ENCODE measurements at regions of chr19 and their contacts with region 1.

Region 1: DNA sequence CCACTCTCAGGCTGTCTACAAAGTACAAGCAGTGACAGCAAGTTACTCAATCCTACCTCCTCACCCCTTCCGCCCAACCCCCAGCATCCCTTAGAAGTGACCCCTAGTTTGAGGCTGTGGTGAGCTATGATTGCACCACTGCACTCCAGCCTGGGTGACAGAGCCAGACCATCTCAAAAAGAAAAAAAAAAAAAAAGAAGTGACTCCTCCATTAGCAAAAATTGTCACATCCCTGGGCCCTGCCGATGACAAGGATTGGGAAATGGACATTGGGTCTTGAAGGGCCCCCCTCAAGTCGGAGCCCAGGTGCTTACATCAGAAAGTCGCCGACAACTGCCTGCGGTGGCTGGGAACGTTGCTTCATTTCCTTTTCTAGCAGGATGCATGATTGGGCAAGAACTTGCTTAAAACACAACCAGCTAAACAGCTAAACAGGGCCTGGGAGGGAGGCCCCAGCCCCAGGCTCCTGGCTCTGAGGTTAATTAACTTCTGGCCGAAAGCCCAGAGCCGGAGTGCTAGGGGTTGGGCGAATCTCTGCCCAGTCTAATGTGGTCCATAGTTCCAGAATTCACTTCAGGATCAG is 15.3 kb downstream of the RAB3D start:
- DNase-seq: no peak
- ATAC-seq: peak; percentile 86
- H3K4me3 ChIP-seq: no peak overlapping the region
- H3K27ac ChIP-seq: no peak overlapping the region
- H3K4me1 ChIP-seq: peaks cover 15% of the 10 kb centered on the region
- H3K27me3 ChIP-seq: no peaks in the 10 kb centered on the region
- CTCF ChIP-seq: no peak

Region 2: GRCh38 chr19:11265513-11266236 is 58.5 kb before region 1 on chr19:
- CTCF ChIA-PET with region 1: no interaction called
- POLR2A ChIA-PET with region 1: interaction called, 11 read pairs
- in situ Hi-C with region 1: no loop called
- intact Hi-C with region 1: no loop called
- DNase-seq: no peak
- ATAC-seq: no peak
- H3K4me3 ChIP-seq: no peak overlapping the region
- H3K27ac ChIP-seq: no peak overlapping the region
- H3K4me1 ChIP-seq: no peaks in the 10 kb centered on the region; the same call in 1 of the 2 replicates
- H3K27me3 ChIP-seq: no peaks in the 10 kb centered on the region
- CTCF ChIP-seq: no peak

Region 3: GRCh38 chr19:11558881-11559828 is 235.0 kb after region 1 on chr19 and contains the start of gene ELOF1:
- CTCF ChIA-PET with region 1: no interaction called
- POLR2A ChIA-PET with region 1: no interaction called
- in situ Hi-C with region 1: loop called (anchors 25 kb)
- intact Hi-C with region 1: no loop called
- DNase-seq: peak; percentile 82
- ATAC-seq: peak; percentile 99
- H3K4me3 ChIP-seq: peak within 1 kb of the TSS; percentile 77 to 80
- H3K27ac ChIP-seq: peak within 1 kb of the TSS; percentile 93
- H3K4me1 ChIP-seq: no peaks in the 10 kb centered on the region
- H3K27me3 ChIP-seq: no peaks in the 10 kb centered on the region
- CTCF ChIP-seq: no peak
- total RNA-seq, gene ELOF1: 62.2 TPM